CD4-positive, alpha-beta T cell (primary cell): ENCODE measurements at regions of chr22 and their contacts with region 1.

Region 1: DNA sequence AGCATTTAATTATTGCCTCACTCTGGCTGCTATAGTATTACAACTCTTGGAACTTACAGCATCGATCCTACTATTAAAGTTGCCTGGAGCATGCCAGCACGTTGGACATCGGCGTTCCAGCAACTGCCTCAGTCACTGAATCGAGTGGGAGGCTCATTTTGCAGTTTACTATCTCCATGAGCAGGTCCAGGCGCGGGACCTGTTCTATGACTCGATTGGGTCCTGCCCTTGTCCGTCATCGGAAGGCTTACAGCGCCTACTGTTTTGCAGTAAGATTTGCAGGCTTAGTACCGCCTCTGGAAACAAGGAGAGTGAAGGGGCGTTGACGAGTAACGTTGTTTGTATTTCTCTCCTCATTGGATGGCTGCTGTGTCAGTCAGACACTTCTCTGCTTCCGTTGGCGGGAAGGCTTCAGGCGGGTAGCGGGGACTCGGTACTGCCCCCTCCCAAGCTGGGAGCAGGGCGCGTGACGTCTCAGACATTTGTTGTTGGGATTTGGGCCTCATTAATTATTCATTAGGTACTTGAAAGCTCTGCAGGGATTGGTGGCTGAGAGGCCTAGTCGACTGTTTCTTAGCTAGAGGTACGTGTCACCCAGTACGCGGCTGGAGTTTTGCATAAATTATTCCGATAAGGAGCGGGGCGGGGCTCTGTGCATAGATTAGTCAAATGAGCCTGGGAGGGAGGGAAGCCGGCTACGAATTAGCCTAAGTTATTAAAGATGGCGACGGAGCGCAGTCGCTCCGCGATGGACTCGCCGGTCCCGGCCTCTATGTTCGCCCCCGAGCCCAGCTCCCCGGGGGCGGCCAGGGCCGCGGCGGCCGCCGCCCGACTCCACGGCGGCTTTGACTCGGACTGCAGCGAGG is at the start of gene GTPBP1:
- DNase-seq: peak; percentile 88 to 100 (median 95)
- ATAC-seq: peak; percentile 78
- H3K4me3 ChIP-seq: peak within 1 kb of the TSS; percentile 96
- H3K4me3 Mint-ChIP-seq: peak within 1 kb of the TSS; percentile 93
- H3K27ac ChIP-seq: peak within 1 kb of the TSS; percentile 70 to 80
- H3K27ac Mint-ChIP-seq: peak within 1 kb of the TSS; percentile 93
- H3K4me1 ChIP-seq: peaks cover 54% of the 10 kb centered on the region
- H3K4me1 Mint-ChIP-seq: peaks cover 66% of the 10 kb centered on the region
- H3K27me3 ChIP-seq: no peaks in the 10 kb centered on the region
- H3K27me3 Mint-ChIP-seq: peaks cover 5% of the 10 kb centered on the region
- CTCF ChIP-seq: peak; percentile 22
- total RNA-seq, gene GTPBP1: 263 to 272 TPM

Region 2: DNA sequence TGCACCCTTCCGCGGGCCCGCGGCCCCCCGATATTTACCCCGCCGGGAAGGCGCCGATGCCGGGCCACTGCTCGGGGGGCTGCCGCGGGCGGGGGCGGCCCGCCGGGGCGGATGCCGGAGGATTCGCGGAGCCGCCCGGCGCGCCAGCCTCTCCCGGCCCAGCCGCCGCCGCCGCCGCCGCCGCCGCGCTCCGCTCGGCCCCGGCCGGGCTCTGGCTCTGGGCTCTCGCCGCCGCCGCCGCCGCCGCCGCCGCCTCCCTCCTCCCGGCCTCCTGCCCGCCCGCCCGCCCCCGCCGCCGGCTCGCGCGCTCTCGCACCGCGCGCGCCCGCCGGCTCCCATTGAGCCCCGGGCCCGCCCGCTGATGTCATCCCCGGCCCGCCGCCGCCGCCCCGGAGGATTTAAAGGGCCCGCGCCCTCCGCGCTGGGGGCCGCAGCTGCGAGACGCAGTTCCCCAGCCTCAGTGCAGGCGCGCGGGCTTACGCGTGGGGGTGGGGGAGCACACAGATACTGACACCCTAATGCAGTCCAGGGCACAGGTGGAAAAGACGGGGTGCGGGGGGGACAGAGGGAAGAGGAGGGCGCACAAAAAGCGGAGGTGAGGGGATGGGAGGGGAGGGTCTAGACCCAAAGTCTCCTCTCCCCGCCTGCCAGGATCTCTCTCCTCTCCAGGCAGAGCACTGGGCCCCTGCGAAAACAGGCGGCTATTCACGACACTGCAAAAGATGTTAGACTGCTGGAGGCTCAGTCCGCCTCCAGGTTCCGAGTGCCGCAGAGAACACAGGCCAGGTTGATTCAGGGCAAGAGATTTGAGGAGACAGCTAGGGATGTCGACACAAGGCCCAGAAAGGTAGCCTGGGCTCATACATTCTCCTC is 388.1 kb before region 1 on chr22 and contains the start of gene CSNK1E:
- CTCF ChIA-PET with region 1: no interaction called
- POLR2A ChIA-PET with region 1: no interaction called
- intact Hi-C with region 1: loop called in 1 of 2 experiments (anchors 5 kb)
- DNase-seq: peak; percentile 37 to 88 (median 70)
- ATAC-seq: peak; percentile 55
- H3K4me3 ChIP-seq: peak within 1 kb of the TSS; percentile 67
- H3K4me3 Mint-ChIP-seq: peak within 1 kb of the TSS; percentile 95
- H3K27ac ChIP-seq: peak within 1 kb of the TSS; percentile 78 to 84
- H3K27ac Mint-ChIP-seq: peak within 1 kb of the TSS; percentile 99
- H3K4me1 ChIP-seq: peaks cover 54% of the 10 kb centered on the region
- H3K4me1 Mint-ChIP-seq: peaks cover 50% of the 10 kb centered on the region
- H3K27me3 ChIP-seq: no peaks in the 10 kb centered on the region
- H3K27me3 Mint-ChIP-seq: no peaks in the 10 kb centered on the region
- CTCF ChIP-seq: no peak
- total RNA-seq, gene CSNK1E: 208 to 217 TPM

Region 3: GRCh38 chr22:38569972-38570778 is 135.3 kb before region 1 on chr22 and contains the start of gene DMC1:
- CTCF ChIA-PET with region 1: no interaction called
- POLR2A ChIA-PET with region 1: interaction called, 6 read pairs
- intact Hi-C with region 1: loop called in 1 of 2 experiments (anchors 2 kb)
- DNase-seq: peak; percentile 93 to 100 (median 97)
- ATAC-seq: peak; percentile 92
- H3K4me3 ChIP-seq: peak within 1 kb of the TSS; percentile 89
- H3K4me3 Mint-ChIP-seq: peak within 1 kb of the TSS; percentile 90
- H3K27ac ChIP-seq: peak within 1 kb of the TSS in 1 of 2 donors; percentile 44
- H3K27ac Mint-ChIP-seq: peak within 1 kb of the TSS; percentile 80
- H3K4me1 ChIP-seq: peaks cover 20% of the 10 kb centered on the region
- H3K4me1 Mint-ChIP-seq: peaks cover 17% of the 10 kb centered on the region
- H3K27me3 ChIP-seq: no peaks in the 10 kb centered on the region
- H3K27me3 Mint-ChIP-seq: no peaks in the 10 kb centered on the region
- CTCF ChIP-seq: no peak
- total RNA-seq, gene DMC1: 0.52 to 0.95 TPM

Region 4: GRCh38 chr22:38681784-38682335 is 23.6 kb before region 1 on chr22 and contains the start of gene TOMM22:
- CTCF ChIA-PET with region 1: interaction called, 58 read pairs
- POLR2A ChIA-PET with region 1: interaction called, 66 read pairs
- intact Hi-C with region 1: loop called (anchors 1 to 2 kb)
- DNase-seq: peak; percentile 67 to 92 (median 80)
- ATAC-seq: peak; percentile 88
- H3K4me3 ChIP-seq: peak within 1 kb of the TSS; percentile 98
- H3K4me3 Mint-ChIP-seq: peak within 1 kb of the TSS; percentile 98
- H3K27ac ChIP-seq: peak within 1 kb of the TSS; percentile 79 to 84
- H3K27ac Mint-ChIP-seq: peak within 1 kb of the TSS; percentile 87
- H3K4me1 ChIP-seq: peaks cover 18% of the 10 kb centered on the region
- H3K4me1 Mint-ChIP-seq: peaks cover 24% of the 10 kb centered on the region
- H3K27me3 ChIP-seq: no peaks in the 10 kb centered on the region
- H3K27me3 Mint-ChIP-seq: no peaks in the 10 kb centered on the region
- CTCF ChIP-seq: peak; percentile 65
- total RNA-seq, gene TOMM22: 53.7 to 54.8 TPM

Region 5: DNA sequence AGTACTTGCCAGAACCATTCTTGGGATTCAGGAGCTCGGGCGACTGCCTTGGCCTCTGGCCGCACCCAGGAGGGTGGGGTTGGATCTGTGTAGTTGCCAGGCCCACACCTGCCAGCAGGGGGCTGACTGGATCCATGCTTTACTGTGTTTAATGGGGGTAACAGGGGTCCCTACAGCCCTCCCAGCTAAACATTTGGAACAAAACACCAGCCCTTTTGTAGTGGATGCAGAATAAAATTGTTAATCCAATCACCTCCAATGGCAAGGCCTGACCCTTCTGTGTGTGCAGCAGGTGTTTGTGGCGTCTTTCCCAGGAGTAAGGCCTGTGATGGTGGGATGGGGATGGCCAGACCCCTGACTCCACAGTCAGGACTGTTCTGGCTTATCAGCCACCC is 27.9 kb after region 1 on chr22:
- CTCF ChIA-PET with region 1: interaction called, 4 read pairs
- POLR2A ChIA-PET with region 1: interaction called, 97 read pairs
- intact Hi-C with region 1: no loop called
- DNase-seq: peak in 11 of 14 experiments; percentile 45 to 71 (median 54)
- ATAC-seq: peak; percentile 54
- H3K4me3 ChIP-seq: no peak overlapping the region
- H3K4me3 Mint-ChIP-seq: peak overlapping the region; percentile 4
- H3K27ac ChIP-seq: peak overlapping the region; percentile 14 to 35
- H3K27ac Mint-ChIP-seq: peak overlapping the region; percentile 88
- H3K4me1 ChIP-seq: peaks cover 54% of the 10 kb centered on the region
- H3K4me1 Mint-ChIP-seq: peaks cover 67% of the 10 kb centered on the region
- H3K27me3 ChIP-seq: no peaks in the 10 kb centered on the region
- H3K27me3 Mint-ChIP-seq: no peaks in the 10 kb centered on the region
- CTCF ChIP-seq: peak; percentile 87

Region 6: DNA sequence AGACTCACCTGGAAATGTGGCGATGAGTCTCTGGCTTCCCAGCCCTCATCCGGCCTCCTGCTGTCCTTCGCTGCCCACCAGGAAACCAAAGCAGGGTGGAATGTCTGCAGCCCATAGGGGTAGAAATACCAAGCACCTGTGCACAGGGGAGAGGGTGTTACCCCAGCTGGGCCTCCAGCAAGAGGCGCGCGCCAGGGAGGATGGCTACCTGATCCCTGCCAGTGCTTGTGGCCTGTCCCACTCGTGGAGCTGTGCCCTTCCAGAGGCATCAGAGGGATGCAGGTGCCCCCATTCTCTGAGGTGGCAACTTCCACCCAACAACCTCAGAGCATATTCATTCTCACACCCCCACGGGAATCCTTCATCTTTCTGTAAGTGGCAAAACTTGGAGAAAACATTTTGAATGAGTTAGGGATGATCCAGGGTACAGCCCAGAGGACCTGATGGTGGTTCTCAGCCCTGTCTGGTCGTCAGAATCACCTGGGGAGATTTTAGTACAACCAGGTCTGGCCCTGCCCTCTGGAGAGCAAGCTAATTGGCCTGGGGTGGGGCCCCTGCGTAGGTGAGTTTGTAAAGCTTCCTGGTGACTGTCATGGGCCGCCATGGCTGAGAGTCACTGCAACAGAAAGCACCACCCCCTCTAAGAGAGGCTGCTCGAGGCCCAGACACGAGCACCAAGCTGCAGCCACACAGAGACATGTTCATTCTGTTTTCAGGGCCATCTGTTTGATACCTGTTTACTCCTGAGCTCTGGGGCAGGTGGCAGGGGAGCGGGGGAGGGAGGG is 40.4 kb after region 1 on chr22:
- CTCF ChIA-PET with region 1: no interaction called
- POLR2A ChIA-PET with region 1: interaction called, 56 read pairs
- intact Hi-C with region 1: loop called in 1 of 2 experiments (anchors 1 kb)
- DNase-seq: no peak
- ATAC-seq: no peak
- H3K4me3 ChIP-seq: no peak overlapping the region
- H3K4me3 Mint-ChIP-seq: no peak overlapping the region
- H3K27ac ChIP-seq: peak overlapping the region in 1 of 2 donors; percentile 50
- H3K27ac Mint-ChIP-seq: peak overlapping the region; percentile 84
- H3K4me1 ChIP-seq: peaks cover 77% of the 10 kb centered on the region
- H3K4me1 Mint-ChIP-seq: peaks cover 47% of the 10 kb centered on the region
- H3K27me3 ChIP-seq: no peaks in the 10 kb centered on the region
- H3K27me3 Mint-ChIP-seq: no peaks in the 10 kb centered on the region
- CTCF ChIP-seq: no peak

Region 7: GRCh38 chr22:38793721-38794466 is 88.4 kb after region 1 on chr22 and contains the start of gene DNAL4:
- CTCF ChIA-PET with region 1: no interaction called
- POLR2A ChIA-PET with region 1: no interaction called
- intact Hi-C with region 1: loop called in 1 of 2 experiments (anchors 5 kb)
- DNase-seq: peak; percentile 82 to 98 (median 89)
- ATAC-seq: peak; percentile 98
- H3K4me3 ChIP-seq: peak within 1 kb of the TSS; percentile 69
- H3K4me3 Mint-ChIP-seq: peak within 1 kb of the TSS; percentile 96
- H3K27ac ChIP-seq: peak within 1 kb of the TSS in 1 of 2 donors; percentile 43
- H3K27ac Mint-ChIP-seq: peak within 1 kb of the TSS; percentile 90
- H3K4me1 ChIP-seq: peaks cover 22% of the 10 kb centered on the region
- H3K4me1 Mint-ChIP-seq: peaks cover 46% of the 10 kb centered on the region
- H3K27me3 ChIP-seq: peaks cover 0 to 2% of the 10 kb centered on the region in 2 experiments
- H3K27me3 Mint-ChIP-seq: peaks cover 4% of the 10 kb centered on the region
- CTCF ChIP-seq: no peak
- total RNA-seq, gene DNAL4: 1.9 to 2.7 TPM